Heart left ventricle (tissue), 16 donors: ENCODE measurements at regions of chr16 and their contacts with region 1.

Region 1: DNA sequence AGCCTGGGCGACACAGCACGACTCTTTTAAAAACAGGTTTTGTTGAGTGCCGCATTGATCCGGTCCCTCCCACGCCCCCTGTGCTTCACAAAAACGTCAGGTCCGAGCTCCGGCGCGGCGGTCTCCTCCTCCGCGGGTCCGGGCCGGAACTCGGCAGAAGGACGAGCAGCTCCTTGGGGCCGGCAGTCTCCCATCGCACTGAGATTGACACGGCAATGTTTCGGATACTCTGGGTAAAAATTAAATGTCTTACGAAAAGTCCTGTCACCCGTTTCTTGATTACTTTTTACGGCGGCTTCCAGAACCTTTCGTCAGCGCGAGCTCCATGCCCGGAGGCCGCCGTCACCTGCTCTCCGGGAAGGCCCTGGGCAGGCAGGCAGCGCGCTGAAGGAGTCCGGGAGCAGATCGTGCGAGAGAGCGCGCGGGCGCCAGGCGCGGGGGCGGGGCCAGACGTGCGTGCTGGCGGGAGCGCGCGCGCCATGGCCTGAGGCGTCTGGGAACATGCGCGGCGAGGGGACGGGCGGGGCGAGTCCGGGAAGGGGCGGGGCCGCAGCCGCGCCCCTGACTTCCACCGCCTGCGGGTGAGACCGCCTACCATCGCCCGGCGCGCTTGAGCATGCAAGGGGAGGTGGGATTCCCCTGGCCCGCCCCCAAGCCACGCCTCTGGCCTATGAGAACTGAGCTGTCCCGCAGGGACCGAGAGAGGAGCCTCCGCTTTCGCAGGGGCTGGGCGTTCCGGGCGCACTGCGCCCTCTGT is 11.7 kb upstream of the SRL start:
- DNase-seq: peak; percentile 99 to 100 (median 100)
- ATAC-seq: peak; percentile 97 to 99 (median 98)
- H3K4me3 ChIP-seq: peak overlapping the region; percentile 23 to 79 (median 63)
- H3K27ac ChIP-seq: peak overlapping the region; percentile 56 to 96 (median 94)
- H3K4me1 ChIP-seq: peaks cover 0 to 11% (median 3%) of the 10 kb centered on the region in 12 donors
- H3K27me3 ChIP-seq: no peaks in the 10 kb centered on the region
- CTCF ChIP-seq: no peak
- POLR2A ChIP-seq: peak in 1 of 2 donors; percentile 69

Region 2: GRCh38 chr16:3983081-3983520 is 270.5 kb before region 1 on chr16:
- intact Hi-C with region 1: loop called in 7 of 10 experiments (anchors 5 to 10 kb)
- DNase-seq: peak; percentile 65 to 74 (median 70)
- ATAC-seq: peak; percentile 67 to 89 (median 80)
- H3K4me3 ChIP-seq: no peak overlapping the region
- H3K27ac ChIP-seq: no peak overlapping the region
- H3K4me1 ChIP-seq: peaks cover 0 to 12% (median 4%) of the 10 kb centered on the region in 12 donors
- H3K27me3 ChIP-seq: no peaks in the 10 kb centered on the region
- CTCF ChIP-seq: peak; percentile 49 to 83 (median 69)
- POLR2A ChIP-seq: no peak

Region 3: GRCh38 chr16:4116337-4117249 is 137.0 kb before region 1 on chr16 and contains the start of gene ADCY9:
- intact Hi-C with region 1: loop called in 9 of 10 experiments (anchors 1 to 10 kb)
- DNase-seq: peak; percentile 82 to 91 (median 87)
- ATAC-seq: peak; percentile 25 to 83 (median 78)
- H3K4me3 ChIP-seq: peak within 1 kb of the TSS; percentile 50 to 92 (median 70)
- H3K27ac ChIP-seq: peak within 1 kb of the TSS in 11 of 12 donors; percentile 70 to 87 (median 83)
- H3K4me1 ChIP-seq: peaks cover 0 to 46% (median 32%) of the 10 kb centered on the region in 12 donors
- H3K27me3 ChIP-seq: no peaks in the 10 kb centered on the region
- CTCF ChIP-seq: no peak
- POLR2A ChIP-seq: peak in 1 of 2 donors; percentile 55
- total RNA-seq, gene ADCY9: 39.5 to 85.8 (median 45.3) TPM

Region 4: GRCh38 chr16:4200000-4200780 is 53.4 kb before region 1 on chr16:
- intact Hi-C with region 1: loop called in 4 of 10 experiments (anchors 1 to 5 kb)
- DNase-seq: peak; percentile 48 to 82 (median 60)
- ATAC-seq: peak; percentile 60 to 80 (median 68)
- H3K4me3 ChIP-seq: no peak overlapping the region
- H3K27ac ChIP-seq: peak overlapping the region in 3 of 12 donors; percentile 4 to 17 (median 7)
- H3K4me1 ChIP-seq: peaks cover 0 to 18% (median 6%) of the 10 kb centered on the region in 12 donors
- H3K27me3 ChIP-seq: no peaks in the 10 kb centered on the region
- CTCF ChIP-seq: peak; percentile 52 to 75 (median 66)
- POLR2A ChIP-seq: no peak

Region 5: GRCh38 chr16:4214215-4214621 is 39.4 kb before region 1 on chr16:
- intact Hi-C with region 1: loop called in 2 of 10 experiments (anchors 5 kb)
- DNase-seq: peak in 1 of 5 donors; percentile 62
- ATAC-seq: peak in 3 of 4 donors; percentile 14 to 32 (median 23)
- H3K4me3 ChIP-seq: no peak overlapping the region
- H3K27ac ChIP-seq: peak overlapping the region; percentile 55 to 97 (median 92)
- H3K4me1 ChIP-seq: peaks cover 3 to 93% (median 63%) of the 10 kb centered on the region in 12 donors
- H3K27me3 ChIP-seq: no peaks in the 10 kb centered on the region
- CTCF ChIP-seq: no peak
- POLR2A ChIP-seq: peak in 1 of 2 donors; percentile 43

Region 6: GRCh38 chr16:4240624-4241023 is 12.9 kb before region 1 on chr16:
- intact Hi-C with region 1: no loop called
- DNase-seq: peak in 4 of 5 donors; percentile 68 to 83 (median 76)
- ATAC-seq: peak; percentile 72 to 81 (median 78)
- H3K4me3 ChIP-seq: peak overlapping the region; percentile 38 to 62 (median 54)
- H3K27ac ChIP-seq: peak overlapping the region; percentile 74 to 100 (median 94)
- H3K4me1 ChIP-seq: peaks cover 0 to 47% (median 11%) of the 10 kb centered on the region in 12 donors
- H3K27me3 ChIP-seq: no peaks in the 10 kb centered on the region
- CTCF ChIP-seq: no peak
- POLR2A ChIP-seq: peak; percentile 30 to 47

Region 7: DNA sequence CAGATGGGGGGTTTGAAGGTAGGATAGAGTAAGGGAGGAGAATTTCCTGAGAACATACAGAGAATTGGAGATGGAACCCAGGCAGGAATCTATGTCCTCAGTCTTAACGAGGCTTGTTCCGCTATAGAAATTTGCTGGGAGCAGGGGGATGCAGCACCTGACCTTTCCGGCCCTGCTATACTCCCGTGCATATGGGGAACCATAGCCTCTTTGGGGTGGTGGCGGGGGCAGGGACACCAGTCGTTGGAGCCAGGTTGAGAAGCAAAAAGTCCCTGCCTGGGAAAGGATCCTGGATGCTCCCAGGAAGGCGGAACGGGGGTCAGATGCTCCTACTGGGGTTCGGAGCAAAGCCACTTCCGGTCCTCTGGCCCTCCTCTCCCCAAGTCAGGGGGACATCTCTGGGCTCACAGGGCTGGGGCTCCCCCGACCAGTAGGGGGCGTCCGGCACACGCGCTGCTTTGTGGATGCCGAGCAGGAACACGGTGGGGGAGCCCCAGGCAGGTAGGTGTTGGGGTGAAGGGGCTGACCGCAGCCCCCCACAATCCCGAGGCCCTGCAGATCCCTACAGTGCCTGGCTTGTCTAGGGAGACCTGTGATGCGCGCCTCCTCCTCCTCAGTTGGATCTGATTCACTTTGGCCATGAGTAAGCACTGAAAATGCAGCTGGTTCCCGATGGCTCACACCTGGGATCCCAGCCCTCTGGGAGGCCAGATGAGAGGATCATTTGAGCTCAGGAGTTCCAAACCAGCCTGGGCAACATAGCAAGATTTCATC is 34.8 kb after region 1 on chr16:
- intact Hi-C with region 1: no loop called
- DNase-seq: peak; percentile 73 to 91 (median 78)
- ATAC-seq: peak in 3 of 4 donors; percentile 78 to 81 (median 78)
- H3K4me3 ChIP-seq: peak overlapping the region in 1 of 12 donors; percentile 13
- H3K27ac ChIP-seq: no peak overlapping the region
- H3K4me1 ChIP-seq: peaks cover 5 to 25% (median 17%) of the 10 kb centered on the region in 12 donors
- H3K27me3 ChIP-seq: peaks cover 0 to 3% (median 0%) of the 10 kb centered on the region in 9 donors
- CTCF ChIP-seq: peak; percentile 91 to 99 (median 96)
- POLR2A ChIP-seq: no peak